ENCODE measurements at regions of chr18 and their contacts with region 1.

Region 1: GRCh38 chr18:11695736-11696135 is 6.7 kb downstream of the GNAL start:
- DNase-seq: no peak
- H3K4me3 ChIP-seq: no peak overlapping the region
- H3K27ac ChIP-seq: no peak overlapping the region
- H3K4me1 ChIP-seq: no peaks in the 10 kb centered on the region
- H3K27me3 ChIP-seq: peaks cover 76% of the 10 kb centered on the region
- CTCF ChIP-seq: no peak

Region 2: GRCh38 chr18:11607906-11608305 is 87.8 kb before region 1 on chr18:
- CTCF ChIA-PET with region 1: no interaction called
- POLR2A ChIA-PET with region 1: interaction called, 17 read pairs
- intact Hi-C with region 1: no loop called
- DNase-seq: no peak
- H3K4me3 ChIP-seq: no peak overlapping the region
- H3K27ac ChIP-seq: no peak overlapping the region
- H3K4me1 ChIP-seq: no peaks in the 10 kb centered on the region
- H3K27me3 ChIP-seq: peaks cover 39% of the 10 kb centered on the region
- CTCF ChIP-seq: no peak

Measured in PC-9 (cell line).